Head of caudate nucleus (tissue), 42 donors: ENCODE measurements at regions of chr22 and their contacts with region 1.

Region 1: DNA sequence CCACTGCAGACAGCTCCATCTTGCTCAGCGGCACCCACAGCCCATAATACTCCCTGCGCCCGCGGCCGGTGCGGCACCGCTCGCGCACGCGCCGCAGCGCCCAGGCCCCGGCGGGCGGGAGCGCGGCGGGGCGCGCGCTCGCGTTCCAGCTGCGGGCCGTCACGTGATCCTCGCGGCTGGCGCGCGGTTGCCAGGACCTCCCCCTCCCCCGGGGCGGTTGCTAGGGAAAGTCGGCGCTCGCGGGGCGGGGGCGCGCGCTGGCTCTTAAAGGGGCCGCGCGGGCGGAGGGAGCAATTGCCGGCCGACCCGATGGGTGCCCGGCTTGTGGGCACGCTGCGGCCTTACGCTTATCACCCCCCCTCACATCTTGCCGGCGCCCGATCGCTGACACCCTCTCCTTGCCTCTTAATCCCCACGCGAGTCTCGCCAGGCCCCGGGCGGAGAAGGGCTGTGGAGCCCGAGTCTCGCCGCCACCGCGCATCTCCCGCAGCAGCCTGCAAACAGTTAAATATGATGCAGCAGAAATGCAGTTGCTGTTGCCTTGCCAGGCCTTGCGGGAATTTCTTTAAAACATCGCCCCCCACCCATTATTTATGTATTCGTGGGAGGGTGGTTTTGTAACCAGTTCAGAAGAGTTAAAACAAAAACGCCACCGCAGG is at the start of gene CBX6:
- DNase-seq: peak; percentile 89 to 99 (median 97)

Region 2: GRCh38 chr22:38774496-38775166 is 97.7 kb before region 1 on chr22:
- intact Hi-C with region 1: loop called (anchors 5 kb)
- DNase-seq: peak in 20 of 42 donors; percentile 42 to 87 (median 64)

Region 3: DNA sequence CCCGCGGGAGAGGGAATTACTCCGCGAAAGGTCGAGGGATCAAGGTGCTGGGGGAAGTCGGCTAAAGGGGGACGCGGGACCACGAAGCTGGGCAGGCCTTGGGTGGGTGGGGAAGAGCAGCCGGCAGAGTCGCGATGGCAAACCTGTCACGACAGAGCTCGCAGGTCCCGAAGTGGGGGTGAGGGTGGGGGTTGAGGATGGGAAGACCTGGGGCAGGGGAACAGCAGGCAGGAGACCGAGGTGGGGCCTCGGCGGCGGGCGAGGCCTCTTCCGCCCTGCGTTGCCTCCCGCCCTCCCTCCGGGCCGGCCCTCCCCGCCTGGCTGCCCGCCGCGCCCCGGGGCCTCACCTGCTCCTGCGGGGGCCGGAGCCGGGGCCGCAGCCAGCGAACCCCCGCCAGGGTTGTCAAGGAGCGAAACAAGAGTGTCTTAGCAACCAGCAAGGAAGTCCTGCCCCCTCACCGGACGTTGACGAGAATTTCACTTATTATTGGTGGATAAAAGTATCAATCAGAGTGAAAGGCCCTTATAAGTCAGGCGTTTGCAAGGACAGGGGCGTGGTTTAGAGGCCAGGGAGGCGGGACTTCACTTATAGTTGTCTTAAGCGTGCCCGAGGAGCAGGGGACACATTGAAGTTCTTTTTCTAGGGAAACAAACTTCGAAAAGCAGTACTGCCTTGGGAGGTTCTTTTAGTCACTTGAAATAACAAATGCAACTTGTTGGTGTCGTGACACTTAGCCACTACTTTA is 78.4 kb before region 1 on chr22 and contains the start of gene DNAL4:
- intact Hi-C with region 1: loop called (anchors 10 kb)
- DNase-seq: peak; percentile 84 to 99 (median 94)

Region 4: DNA sequence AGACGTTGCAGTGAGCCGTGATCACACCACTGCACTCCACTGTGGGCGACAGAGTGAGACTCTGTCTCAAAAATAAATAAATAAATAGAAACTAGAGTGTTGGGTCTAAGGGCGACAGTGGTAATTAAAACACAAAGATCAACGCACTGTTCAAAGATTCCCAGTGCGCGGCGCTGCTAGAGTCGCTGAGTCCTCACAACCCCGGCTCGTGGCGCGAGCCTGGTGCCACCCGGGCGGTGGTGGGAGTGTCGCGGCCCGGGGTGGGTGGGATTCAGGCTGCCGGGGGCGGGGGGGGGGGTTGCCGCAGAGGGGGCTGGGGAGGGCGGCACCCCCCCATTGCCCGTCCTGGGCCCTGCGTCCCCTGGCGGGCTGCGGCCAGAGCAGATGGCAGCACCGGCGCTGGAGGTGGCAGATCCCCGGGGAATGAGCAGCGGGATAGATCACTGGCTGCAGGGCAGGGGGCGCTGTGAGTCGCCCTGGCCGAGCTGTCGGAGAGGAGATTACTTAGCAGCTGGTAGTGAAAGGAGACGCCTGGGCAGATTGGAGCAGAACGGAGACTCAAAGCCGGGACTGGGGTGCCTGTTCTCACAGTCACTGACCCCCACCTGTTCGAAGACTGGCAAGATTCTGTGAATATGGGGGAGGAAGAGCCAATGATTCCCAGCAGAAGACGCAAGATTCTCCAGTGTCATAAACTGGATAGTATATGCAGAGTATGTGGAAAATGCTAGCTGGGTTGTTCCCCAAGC is 54.9 kb after region 1 on chr22:
- intact Hi-C with region 1: loop called (anchors 10 kb)
- DNase-seq: peak; percentile 56 to 91 (median 82)

Region 5: GRCh38 chr22:39003165-39003638 is 130.9 kb after region 1 on chr22:
- intact Hi-C with region 1: loop called (anchors 10 kb)
- DNase-seq: peak in 41 of 42 donors; percentile 26 to 84 (median 61)

Region 6: DNA sequence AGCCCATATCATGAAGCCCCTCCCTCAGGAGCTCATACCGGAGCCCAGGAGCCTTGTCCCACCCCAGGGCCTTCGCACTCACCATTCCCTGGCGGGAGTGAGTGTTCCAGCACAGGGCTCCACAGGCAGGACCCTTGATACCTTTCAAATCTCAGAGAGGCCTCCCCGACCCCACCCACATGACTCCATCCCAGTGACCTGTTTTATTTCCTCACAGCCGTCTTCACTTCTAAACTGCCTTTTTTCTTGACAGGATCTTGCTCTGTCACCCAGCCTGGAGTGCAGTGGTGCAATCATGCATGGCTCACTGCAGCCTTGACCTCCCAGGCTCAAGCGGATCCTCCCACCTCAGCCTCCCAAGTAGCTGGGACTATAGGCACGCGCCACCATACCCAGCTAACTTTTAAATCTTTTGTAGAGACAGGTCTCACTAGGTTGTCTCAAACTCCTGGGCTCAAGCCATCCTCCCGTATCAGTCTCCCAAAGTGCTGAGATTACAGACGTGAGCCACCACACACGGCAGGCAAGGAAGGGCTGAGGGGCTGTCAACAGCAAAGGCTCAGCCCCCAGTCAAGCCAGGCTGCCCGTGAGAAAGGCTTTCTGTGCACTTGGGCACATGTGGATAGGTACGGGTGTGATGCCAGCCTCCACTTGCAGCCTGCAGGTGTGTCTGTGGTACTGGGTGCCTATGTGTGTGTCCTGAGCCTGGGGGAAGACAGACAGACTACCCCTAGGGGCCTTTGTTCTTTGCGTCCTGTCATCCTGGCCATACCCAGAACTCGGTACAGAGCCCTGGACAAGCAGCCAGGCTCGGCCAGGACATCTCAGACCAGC is 437.8 kb after region 1 on chr22:
- intact Hi-C with region 1: loop called (anchors 5 kb)
- DNase-seq: no peak